WTC11 (cell line): ENCODE measurements at regions of chr15 and their contacts with region 1.

Region 1: DNA sequence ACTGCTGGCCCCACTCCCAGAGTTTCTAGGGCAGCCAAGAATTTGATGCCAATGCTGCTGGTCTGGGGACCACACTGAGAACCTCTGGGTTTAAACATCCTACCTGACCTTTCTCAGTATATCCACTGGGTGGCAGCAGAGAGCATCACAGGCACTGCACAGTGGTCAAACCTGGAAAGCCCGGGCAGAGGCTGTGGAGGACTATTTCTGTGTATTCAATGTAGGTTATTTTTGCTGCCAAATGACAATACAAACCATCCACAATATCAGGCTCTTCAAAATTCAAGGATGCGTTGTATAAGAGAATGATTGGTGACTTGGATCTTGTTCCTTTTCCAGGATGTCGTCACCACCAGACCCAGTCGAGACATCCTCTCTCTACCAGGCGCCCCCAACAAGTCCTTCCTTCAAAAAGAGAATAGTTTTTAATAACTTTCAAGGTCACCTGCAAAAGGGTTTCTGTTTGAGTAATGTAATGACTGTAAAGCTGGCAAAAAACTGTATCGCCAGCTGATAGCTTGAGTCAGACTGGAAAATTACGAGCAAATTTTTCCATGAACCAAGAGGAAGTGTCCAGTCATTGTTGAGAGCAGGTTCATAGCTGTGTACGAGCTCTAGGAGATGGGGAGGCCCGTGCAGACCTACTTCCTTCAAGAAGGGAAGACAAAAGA is 30.5 kb upstream of the MYZAP start:
- DNase-seq: peak; percentile 66
- ATAC-seq: peak; percentile 88
- H3K4me3 Mint-ChIP-seq: no peak overlapping the region
- H3K27ac Mint-ChIP-seq: no peak overlapping the region
- H3K4me1 Mint-ChIP-seq: peaks cover 8% of the 10 kb centered on the region
- H3K27me3 Mint-ChIP-seq: no peaks in the 10 kb centered on the region
- CTCF ChIP-seq: peak; percentile 86

Region 2: DNA sequence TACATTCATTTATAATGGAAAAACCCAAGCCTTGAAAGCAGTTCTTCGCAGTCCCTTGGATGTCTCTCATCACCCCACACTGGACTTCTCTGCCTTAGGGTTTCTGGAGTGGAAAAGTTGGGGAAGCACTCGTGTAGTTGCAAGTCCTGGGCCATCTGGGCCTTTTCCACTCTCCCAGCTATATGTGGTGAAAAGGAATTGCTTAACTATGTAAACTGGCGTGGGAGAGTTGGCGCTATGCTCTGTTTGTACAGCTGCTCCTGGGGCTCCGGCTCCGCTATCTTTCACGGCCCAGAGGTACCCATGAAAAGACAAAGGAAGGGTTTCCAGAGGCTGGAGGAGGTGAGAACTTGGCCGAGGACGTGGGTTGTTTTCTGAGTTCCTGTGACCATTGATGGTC is 50.5 kb before region 1 on chr15:
- CTCF ChIA-PET with region 1: no interaction called
- POLR2A ChIA-PET with region 1: no interaction called
- DNase-seq: no peak
- ATAC-seq: no peak
- H3K4me3 Mint-ChIP-seq: no peak overlapping the region
- H3K27ac Mint-ChIP-seq: no peak overlapping the region
- H3K4me1 Mint-ChIP-seq: peaks cover 27% of the 10 kb centered on the region
- H3K27me3 Mint-ChIP-seq: no peaks in the 10 kb centered on the region
- CTCF ChIP-seq: no peak

Region 3: DNA sequence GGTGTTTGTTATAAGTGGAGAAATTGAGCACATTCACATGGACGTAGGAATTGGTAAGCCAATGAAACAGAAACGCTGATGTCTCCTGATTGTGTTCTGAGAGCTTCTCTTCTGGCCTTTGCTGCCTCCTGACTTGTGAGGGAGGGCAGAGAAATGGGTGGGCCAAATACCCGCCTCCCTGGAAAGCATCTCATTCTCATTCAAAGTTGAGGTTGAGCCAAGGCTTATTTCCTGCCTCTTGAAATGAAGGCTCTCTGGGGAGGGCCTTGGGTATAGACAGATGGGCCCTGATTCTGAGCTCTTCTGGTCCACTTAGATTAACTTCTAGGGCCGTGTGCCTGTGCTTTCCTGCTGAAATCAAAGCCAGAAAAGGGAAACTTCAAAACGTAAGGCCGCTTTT is 26.9 kb before region 1 on chr15:
- CTCF ChIA-PET with region 1: interaction called, 10 read pairs
- POLR2A ChIA-PET with region 1: no interaction called
- DNase-seq: no peak
- ATAC-seq: peak; percentile 89
- H3K4me3 Mint-ChIP-seq: no peak overlapping the region
- H3K27ac Mint-ChIP-seq: peak overlapping the region; percentile 67
- H3K4me1 Mint-ChIP-seq: peaks cover 22% of the 10 kb centered on the region
- H3K27me3 Mint-ChIP-seq: no peaks in the 10 kb centered on the region
- CTCF ChIP-seq: no peak

Region 4: GRCh38 chr15:57541805-57542504 is 19.2 kb before region 1 on chr15:
- CTCF ChIA-PET with region 1: interaction called, 21 read pairs
- POLR2A ChIA-PET with region 1: no interaction called
- DNase-seq: peak; percentile 77
- ATAC-seq: peak; percentile 67
- H3K4me3 Mint-ChIP-seq: no peak overlapping the region
- H3K27ac Mint-ChIP-seq: peak overlapping the region; percentile 89
- H3K4me1 Mint-ChIP-seq: no peaks in the 10 kb centered on the region
- H3K27me3 Mint-ChIP-seq: no peaks in the 10 kb centered on the region
- CTCF ChIP-seq: peak; percentile 60

Region 5: DNA sequence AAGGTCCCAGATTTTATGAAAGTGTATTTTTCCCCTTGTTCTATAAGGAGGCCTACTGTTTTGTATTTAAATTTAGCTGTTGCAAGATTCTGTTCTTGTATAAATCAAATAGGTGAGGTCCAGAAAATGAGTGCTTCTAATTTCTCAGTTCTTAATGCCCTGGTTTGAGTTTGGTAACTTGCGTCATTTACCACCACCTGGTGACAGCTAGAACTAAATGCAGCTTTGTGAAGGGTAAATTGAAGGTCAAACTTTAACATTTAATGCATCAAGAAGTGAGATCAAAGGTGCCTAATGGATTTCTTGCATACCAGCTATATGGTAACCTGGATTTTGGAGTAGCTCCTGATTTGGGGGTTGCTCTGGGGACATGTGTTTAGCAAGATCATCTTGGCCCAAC is 94.6 kb after region 1 on chr15:
- CTCF ChIA-PET with region 1: interaction called, 13 read pairs
- POLR2A ChIA-PET with region 1: no interaction called
- DNase-seq: no peak
- ATAC-seq: no peak
- H3K4me3 Mint-ChIP-seq: no peak overlapping the region
- H3K27ac Mint-ChIP-seq: no peak overlapping the region
- H3K4me1 Mint-ChIP-seq: no peaks in the 10 kb centered on the region
- H3K27me3 Mint-ChIP-seq: no peaks in the 10 kb centered on the region
- CTCF ChIP-seq: no peak